ENCODE measurements at regions of chr3 and their contacts with region 1.

Region 1: DNA sequence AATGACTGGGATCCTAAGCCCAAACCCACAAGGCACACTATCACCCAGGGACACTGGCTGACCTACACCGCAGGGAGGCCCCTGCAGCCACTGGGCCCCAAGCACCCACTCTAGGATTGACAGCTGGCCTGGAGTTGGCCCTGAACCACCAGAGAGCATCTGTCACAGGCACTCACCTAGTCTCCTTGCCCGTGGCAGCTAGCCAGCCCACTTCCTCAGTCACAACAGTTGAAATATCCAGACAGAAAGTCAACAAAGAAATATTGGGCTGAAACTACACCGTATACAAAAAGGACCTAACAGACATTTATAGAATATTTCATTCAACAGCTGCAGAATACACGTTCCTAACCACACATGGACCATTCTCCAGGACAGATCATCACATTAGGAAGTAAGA is 5.2 kb upstream of the SPINK8 start:
- DNase-seq: no peak
- ATAC-seq: no peak

Region 2: GRCh38 chr3:48267782-48268181 is 70.9 kb before region 1 on chr3:
- intact Hi-C with region 1: no loop called
- DNase-seq: no peak
- ATAC-seq: no peak

Region 3: DNA sequence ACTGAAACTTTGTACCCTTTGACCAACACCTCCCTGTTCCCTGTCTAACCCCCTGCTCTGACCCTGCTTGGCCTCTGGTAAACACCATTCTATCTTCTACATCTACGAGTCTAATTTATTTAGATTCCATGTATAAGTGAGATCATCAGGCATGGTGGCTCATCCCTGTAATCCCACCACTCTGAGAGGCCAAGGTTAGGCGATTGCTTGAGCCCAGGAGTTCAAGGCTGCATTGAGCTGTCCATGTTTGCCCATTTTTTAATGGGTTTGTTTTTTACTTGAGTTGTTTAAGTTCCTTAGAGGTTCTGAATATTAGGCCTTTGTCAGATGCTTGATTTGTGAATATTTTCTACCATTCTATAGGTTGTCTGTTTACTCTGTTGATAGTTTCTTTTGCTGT is 50.3 kb after region 1 on chr3:
- intact Hi-C with region 1: no loop called
- DNase-seq: no peak
- ATAC-seq: no peak

Region 4: DNA sequence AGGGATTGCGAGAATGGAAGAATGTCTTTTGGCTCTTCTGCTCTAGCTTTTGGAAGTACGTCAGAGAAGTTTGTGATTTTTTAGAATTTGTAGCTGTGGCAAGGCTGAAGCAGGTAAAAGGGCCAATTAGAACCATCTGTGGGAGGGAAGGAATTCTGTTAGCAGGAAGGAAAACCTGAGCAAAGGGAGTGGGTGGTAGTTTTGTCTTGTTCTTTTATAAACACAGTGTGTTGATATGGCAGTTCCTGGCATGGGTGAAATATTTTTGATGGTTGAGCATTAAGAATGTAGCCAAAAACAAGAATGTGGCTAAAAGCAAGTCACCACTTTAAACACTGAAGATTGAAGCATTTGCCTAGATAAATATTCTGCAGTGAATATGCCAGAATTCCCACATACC is 1155.3 kb after region 1 on chr3:
- intact Hi-C with region 1: loop called (anchors 10 kb)
- DNase-seq: no peak
- ATAC-seq: no peak

Measured in sciatic nerve (tissue), 2 donors.